Heart left ventricle (tissue), 16 donors: ENCODE measurements at regions of chr12 and their contacts with region 1.

Region 1: GRCh38 chr12:121917979-121918678 is at the start of gene CFAP251:
- DNase-seq: peak; percentile 91 to 98 (median 97)
- ATAC-seq: peak; percentile 93 to 98 (median 95)
- H3K4me3 ChIP-seq: peak within 1 kb of the TSS; percentile 3 to 62 (median 51)
- H3K27ac ChIP-seq: peak within 1 kb of the TSS in 7 of 12 donors; percentile 24 to 71 (median 47)
- H3K4me1 ChIP-seq: peaks cover 0 to 15% (median 6%) of the 10 kb centered on the region in 12 donors
- H3K27me3 ChIP-seq: no peaks in the 10 kb centered on the region
- CTCF ChIP-seq: peak; percentile 15 to 85 (median 64)
- POLR2A ChIP-seq: no peak
- total RNA-seq, gene CFAP251: 0.60 to 8.0 (median 1.2) TPM

Region 2: DNA sequence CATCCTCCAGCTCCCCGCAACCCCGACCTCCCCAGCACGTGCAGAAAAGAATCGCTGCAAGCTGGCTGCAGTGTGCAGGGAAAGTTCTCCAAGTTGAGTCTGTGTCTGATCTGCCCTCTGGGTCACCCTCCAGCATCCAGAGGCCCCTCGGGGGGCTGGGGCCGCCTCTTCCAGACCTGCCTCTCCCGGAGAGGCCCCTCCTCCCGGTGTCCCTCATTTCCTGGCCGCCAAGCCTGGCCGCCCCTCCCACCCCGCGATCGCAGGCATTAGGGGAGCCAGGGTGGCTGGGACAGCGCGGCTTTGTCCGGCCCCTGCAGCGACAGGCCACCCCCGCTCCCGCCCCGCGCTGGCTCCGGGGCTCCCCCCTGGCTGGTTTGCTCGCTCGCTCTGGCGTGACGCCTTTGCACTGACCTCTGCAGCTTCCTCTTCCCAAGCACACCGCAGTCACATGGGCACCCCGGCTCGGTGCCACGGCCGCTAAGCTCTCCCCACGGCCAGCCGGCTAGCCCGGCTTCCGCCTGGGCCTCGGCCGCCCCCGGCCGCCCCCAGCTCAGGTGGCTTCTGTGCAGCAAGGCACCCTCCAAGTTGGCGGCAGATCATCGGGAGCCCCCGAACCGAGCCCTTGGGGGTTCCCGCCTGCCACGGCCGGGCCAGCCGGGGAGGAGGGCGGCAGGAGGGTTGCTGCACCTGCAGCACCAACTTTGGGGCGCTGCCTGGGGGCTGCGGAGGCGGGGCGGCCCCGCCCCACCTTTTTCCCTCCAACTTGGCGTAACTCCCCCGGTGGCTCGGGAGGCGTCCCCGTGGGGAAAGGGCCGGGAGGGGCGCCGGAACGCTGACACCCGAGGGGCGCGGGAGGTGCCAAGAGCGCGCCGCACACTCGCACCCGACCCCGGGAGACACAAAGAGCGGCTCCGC is 381.0 kb before region 1 on chr12:
- intact Hi-C with region 1: no loop called
- DNase-seq: peak; percentile 92 to 94 (median 93)
- ATAC-seq: peak; percentile 68 to 87 (median 84)
- H3K4me3 ChIP-seq: peak overlapping the region; percentile 35 to 92 (median 78)
- H3K27ac ChIP-seq: peak overlapping the region; percentile 93 to 98 (median 96)
- H3K4me1 ChIP-seq: peaks cover 0 to 66% (median 49%) of the 10 kb centered on the region in 12 donors
- H3K27me3 ChIP-seq: no peaks in the 10 kb centered on the region
- CTCF ChIP-seq: peak in 1 of 12 donors; percentile 4
- POLR2A ChIP-seq: peak in 1 of 2 donors; percentile 63

Region 3: DNA sequence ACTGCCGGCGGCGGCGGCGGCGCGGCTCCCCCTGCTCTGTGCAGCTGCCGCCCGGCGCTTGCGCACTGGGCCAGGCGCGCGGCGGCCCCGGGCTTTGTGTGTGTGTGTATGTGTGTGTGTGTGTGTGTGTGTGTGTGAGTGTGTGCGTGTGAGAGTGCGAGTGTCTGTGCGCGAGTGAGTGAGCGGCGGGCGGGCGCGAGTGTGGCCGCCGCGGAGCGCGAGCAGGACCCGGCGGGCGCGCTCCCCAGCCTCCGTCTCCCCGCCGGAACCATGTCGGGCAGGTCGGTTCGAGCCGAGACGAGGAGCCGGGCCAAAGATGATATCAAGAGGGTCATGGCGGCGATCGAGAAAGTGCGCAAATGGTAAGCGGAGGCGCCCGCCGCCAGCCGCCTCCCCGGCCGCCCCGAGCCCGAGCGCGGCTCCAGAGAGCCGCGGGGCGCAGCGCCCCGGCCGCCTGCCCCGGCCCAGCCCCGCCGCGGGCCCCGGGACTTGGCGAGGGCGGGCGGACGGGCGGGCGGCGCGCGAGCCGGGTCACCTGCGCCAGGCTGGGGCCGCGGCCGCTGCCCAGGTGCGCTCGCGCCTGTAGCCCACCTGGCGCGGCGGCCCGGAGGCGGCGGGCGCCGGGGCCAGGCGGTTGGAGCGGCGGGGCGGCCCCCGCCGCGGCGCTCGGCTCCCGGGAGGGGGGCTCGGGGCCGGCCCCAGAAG is 103.8 kb after region 1 on chr12 and contains the start of gene BCL7A:
- intact Hi-C with region 1: loop called in 5 of 10 experiments (anchors 5 kb)
- DNase-seq: peak; percentile 66 to 81 (median 73)
- ATAC-seq: peak; percentile 57 to 84 (median 77)
- H3K4me3 ChIP-seq: peak within 1 kb of the TSS; percentile 42 to 88 (median 71)
- H3K27ac ChIP-seq: peak within 1 kb of the TSS; percentile 72 to 94 (median 81)
- H3K4me1 ChIP-seq: peaks cover 3 to 32% (median 16%) of the 10 kb centered on the region in 12 donors
- H3K27me3 ChIP-seq: peaks cover 0 to 11% (median 0%) of the 10 kb centered on the region in 9 donors
- CTCF ChIP-seq: no peak
- POLR2A ChIP-seq: no peak
- total RNA-seq, gene BCL7A: 11.4 to 22.1 (median 14.3) TPM

Region 4: DNA sequence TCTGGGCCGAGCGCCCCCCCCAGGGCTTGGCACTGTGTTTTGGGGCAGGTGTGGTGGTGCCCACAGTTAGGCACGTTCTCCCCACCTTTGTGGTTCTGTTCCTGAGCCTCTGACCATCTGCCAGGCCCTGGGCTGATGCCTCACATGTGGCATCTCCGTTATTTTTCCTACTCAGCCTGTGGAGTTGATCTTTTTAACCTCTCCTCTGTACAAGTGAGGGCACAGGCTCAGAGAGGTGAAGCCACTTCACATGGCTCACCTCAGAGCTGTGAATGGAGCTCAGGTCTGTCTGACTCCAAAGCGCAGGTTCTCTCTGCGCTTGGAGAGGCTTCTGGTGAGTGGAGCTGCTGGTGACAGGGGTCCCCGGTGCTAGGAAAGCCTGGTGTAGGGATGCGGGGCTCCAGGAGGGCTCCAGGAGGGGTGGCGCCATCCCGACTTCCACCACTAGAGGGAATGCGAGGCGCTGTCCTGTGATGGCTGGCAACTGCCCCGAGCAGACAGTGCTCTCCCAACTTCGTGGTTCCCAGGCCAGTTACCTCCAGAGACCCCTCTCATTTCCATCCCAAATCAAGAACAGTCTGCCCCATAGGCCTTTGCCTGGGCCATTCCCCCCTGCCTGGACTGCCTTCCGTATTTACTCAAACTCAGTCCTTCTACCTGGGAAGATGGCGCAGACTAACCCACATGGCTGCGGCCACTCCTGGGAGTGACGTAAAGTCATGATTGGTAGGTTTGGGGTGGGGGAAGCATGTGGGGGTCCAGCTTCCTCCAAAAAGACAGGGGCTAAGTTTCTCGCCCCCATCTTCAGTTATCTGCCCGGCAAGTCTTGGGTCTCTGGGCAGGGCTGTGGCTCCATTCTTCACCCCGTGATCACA is 113.5 kb after region 1 on chr12:
- intact Hi-C with region 1: loop called in 2 of 10 experiments (anchors 5 kb)
- DNase-seq: peak in 2 of 5 donors; percentile 39 to 51
- ATAC-seq: peak in 3 of 4 donors; percentile 38 to 56 (median 48)
- H3K4me3 ChIP-seq: no peak overlapping the region
- H3K27ac ChIP-seq: no peak overlapping the region
- H3K4me1 ChIP-seq: peaks cover 0 to 26% (median 6%) of the 10 kb centered on the region in 12 donors
- H3K27me3 ChIP-seq: no peaks in the 10 kb centered on the region
- CTCF ChIP-seq: peak; percentile 47 to 75 (median 66)
- POLR2A ChIP-seq: no peak

Region 5: GRCh38 chr12:122051231-122051876 is 133.2 kb after region 1 on chr12:
- intact Hi-C with region 1: loop called in 1 of 10 experiments (anchors 5 kb)
- DNase-seq: peak in 4 of 5 donors; percentile 68 to 73 (median 72)
- ATAC-seq: peak; percentile 77 to 85 (median 80)
- H3K4me3 ChIP-seq: no peak overlapping the region
- H3K27ac ChIP-seq: peak overlapping the region; percentile 62 to 97 (median 84)
- H3K4me1 ChIP-seq: peaks cover 4 to 29% (median 19%) of the 10 kb centered on the region in 12 donors
- H3K27me3 ChIP-seq: no peaks in the 10 kb centered on the region
- CTCF ChIP-seq: peak in 1 of 12 donors; percentile 7
- POLR2A ChIP-seq: no peak

Region 6: DNA sequence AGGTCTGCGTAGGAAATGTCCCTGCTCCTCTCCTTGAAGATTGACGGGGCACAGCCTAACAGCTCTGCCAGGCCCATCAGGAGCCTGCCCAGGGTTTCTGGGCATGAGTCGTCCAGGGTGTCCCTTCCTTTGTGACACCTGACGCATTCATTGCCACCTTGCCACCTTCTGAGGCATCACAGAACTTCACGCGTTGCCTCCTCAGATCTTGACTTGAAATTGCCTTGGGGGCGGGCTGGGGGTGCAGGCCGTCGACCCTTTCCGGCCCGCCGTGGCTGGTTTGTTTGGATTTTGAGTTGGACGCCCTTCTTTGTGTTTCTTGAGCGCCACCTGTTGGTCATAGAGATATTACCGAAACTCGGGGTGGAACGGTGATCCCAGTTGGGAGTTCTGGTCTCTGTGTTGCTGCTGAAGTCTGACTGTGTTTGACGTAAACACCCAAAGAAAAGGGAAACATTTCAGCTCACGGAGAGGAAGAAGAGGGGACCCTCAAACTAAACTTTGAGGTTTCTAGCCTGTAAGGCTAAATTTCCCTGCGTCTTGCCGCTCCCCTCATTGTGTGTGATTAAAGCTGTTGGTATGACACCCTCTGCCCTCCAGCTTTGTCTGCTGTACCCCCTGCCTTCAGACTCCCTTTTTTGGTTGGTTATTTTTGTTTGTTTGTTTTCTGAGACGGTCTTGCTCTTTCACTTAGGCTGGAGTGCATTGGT is 205.1 kb after region 1 on chr12:
- intact Hi-C with region 1: loop called in 7 of 10 experiments (anchors 2 to 10 kb)
- DNase-seq: peak; percentile 55 to 68 (median 64)
- ATAC-seq: peak in 3 of 4 donors; percentile 44 to 56 (median 51)
- H3K4me3 ChIP-seq: peak overlapping the region in 4 of 12 donors; percentile 2 to 21 (median 16)
- H3K27ac ChIP-seq: peak overlapping the region in 2 of 12 donors; percentile 36 to 64
- H3K4me1 ChIP-seq: peaks cover 0 to 57% (median 30%) of the 10 kb centered on the region in 12 donors
- H3K27me3 ChIP-seq: no peaks in the 10 kb centered on the region
- CTCF ChIP-seq: peak; percentile 64 to 90 (median 78)
- POLR2A ChIP-seq: no peak

Region 7: DNA sequence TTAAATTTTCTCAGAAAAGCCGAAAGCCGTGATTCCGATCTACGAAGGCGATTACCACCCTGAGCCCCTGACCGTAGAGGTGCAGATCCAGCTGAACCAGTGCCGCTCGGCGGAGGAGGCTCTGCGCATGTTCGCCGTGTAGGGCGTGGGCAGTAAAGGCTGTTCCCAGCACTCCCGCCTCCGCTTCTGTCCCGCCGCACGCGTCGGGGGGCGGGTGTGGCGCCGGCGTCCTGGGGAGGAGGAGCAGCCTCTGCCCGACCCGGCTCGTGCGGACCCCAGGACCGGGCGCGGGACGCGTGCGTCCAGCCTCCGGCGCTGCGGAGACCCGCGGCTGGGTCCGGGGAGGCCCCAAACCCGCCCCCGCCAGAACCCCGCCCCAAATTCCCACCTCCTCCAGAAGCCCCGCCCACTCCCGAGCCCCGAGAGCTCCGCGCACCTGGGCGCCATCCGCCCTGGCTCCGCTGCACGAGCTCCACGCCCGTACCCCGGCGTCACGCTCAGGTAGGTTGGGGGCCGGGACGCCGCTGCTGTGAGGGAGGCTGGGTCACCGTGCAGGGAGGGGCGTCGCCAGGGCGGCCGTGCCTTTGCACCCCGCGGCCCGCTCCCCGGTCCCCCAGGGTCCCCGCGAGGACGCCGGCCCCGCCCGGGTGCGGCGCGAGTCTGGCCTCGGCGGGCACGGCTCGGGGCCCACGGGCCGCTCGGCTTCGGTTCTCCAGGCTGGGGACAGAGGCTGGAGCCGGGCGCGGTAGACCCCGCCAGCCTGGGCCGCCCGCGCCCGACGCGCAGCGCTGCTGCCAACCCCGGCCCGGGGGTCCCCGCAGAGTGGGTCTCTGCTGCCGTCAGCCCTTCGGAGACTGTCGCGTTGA is 285.4 kb after region 1 on chr12 and contains the start of gene B3GNT4:
- intact Hi-C with region 1: loop called in 1 of 10 experiments (anchors 10 kb)
- DNase-seq: peak in 4 of 5 donors; percentile 44 to 77 (median 53)
- ATAC-seq: peak in 3 of 4 donors; percentile 51 to 70 (median 65)
- H3K4me3 ChIP-seq: peak within 1 kb of the TSS; percentile 33 to 70 (median 58)
- H3K27ac ChIP-seq: no peak within 1 kb of the TSS
- H3K4me1 ChIP-seq: peaks cover 0 to 21% (median 11%) of the 10 kb centered on the region in 12 donors
- H3K27me3 ChIP-seq: peaks cover 19 to 61% (median 40%) of the 10 kb centered on the region in 9 donors
- CTCF ChIP-seq: no peak
- POLR2A ChIP-seq: no peak
- total RNA-seq, gene B3GNT4: not detected